ENCODE measurements at regions of chr3 and their contacts with region 1.

Region 1: DNA sequence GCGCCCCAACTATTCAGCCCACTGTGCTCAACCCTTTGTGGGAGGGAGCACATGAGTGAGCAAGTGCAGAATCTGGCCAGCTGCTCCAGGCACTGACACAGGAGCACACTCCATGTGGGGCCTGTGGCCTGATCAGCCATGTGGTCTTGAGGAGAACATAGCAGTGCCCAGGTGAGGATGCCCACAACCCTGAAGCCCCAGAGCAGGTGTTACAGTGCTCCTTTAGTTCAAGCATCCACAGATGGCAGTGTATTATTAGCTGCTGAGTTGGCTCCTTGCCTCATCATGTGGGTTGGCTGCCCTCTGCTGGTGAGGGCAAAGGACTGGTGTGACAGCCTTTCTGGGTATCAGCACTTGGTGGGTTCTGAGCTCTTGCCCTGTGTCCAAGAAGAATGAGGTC is 1588.2 kb downstream of the SI start:
- DNase-seq: peak in 1 of 2 donors; percentile 38
- ATAC-seq: no peak
- H3K4me3 ChIP-seq: no peak overlapping the region
- H3K27ac ChIP-seq: no peak overlapping the region
- H3K4me1 ChIP-seq: no peaks in the 10 kb centered on the region
- H3K27me3 ChIP-seq: no peaks in the 10 kb centered on the region

Region 2: GRCh38 chr3:163056874-163057497 is 433.1 kb before region 1 on chr3:
- intact Hi-C with region 1: loop called in 1 of 2 experiments (anchors 5 kb)
- DNase-seq: no peak
- ATAC-seq: no peak
- H3K4me3 ChIP-seq: no peak overlapping the region
- H3K27ac ChIP-seq: no peak overlapping the region
- H3K4me1 ChIP-seq: no peaks in the 10 kb centered on the region
- H3K27me3 ChIP-seq: no peaks in the 10 kb centered on the region

Region 3: GRCh38 chr3:163644172-163644571 is 154.1 kb after region 1 on chr3:
- intact Hi-C with region 1: no loop called
- DNase-seq: no peak
- ATAC-seq: no peak
- H3K4me3 ChIP-seq: no peak overlapping the region
- H3K27ac ChIP-seq: no peak overlapping the region
- H3K4me1 ChIP-seq: no peaks in the 10 kb centered on the region
- H3K27me3 ChIP-seq: no peaks in the 10 kb centered on the region